ENCODE measurements at regions of chr6 and their contacts with region 1.

Region 1: GRCh38 chr6:364609-365540 is 26.7 kb upstream of the IRF4 start:
- DNase-seq: peak; percentile 79
- CTCF ChIP-seq: no peak

Region 2: DNA sequence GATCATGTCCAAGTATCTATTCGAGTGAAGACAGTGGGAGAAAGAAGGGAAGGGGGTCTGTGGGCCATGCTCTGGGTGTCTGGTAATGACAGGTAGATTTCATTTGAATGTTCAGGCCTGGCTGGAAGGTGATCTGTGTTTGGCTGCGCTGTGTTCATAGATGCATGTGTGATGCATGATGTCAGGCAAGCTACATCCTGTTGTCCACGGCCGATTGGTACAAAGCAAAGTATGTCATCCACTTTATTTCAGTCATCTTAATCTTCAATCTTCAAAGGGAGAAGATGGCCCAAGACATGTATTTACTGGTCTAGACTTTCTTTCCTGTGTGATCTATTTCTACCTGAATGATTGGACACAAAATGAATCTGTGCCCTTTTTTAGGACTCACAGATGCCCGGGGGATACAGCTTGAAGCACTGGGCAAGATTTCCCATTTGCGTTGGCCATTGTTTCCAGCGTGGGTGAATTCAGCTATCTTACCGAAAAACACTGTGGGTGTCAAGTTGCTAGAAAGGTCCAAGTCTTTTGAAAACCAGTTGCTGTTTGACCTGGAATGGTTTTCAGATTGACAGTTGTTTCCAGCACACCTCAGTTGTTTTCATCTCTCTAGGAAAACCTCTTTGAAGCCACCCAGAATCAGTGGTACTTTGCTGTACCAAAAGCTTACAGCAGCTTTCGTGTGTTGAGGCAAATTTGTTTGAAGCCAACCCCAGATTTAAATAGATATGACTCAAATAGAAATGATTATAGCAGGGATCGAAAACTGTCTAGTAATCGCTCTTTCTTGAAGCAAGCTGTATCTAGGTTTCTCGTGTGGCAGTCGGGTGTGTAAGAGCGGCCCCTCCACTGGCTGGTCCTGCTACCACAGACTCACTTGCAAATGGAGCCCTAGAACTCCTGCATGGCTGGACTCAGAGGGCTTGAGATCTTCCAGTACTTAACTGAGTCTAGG is 45.4 kb before region 1 on chr6:
- CTCF ChIA-PET with region 1: interaction called, 17 read pairs
- POLR2A ChIA-PET with region 1: no interaction called
- DNase-seq: peak; percentile 82
- CTCF ChIP-seq: no peak

Region 3: DNA sequence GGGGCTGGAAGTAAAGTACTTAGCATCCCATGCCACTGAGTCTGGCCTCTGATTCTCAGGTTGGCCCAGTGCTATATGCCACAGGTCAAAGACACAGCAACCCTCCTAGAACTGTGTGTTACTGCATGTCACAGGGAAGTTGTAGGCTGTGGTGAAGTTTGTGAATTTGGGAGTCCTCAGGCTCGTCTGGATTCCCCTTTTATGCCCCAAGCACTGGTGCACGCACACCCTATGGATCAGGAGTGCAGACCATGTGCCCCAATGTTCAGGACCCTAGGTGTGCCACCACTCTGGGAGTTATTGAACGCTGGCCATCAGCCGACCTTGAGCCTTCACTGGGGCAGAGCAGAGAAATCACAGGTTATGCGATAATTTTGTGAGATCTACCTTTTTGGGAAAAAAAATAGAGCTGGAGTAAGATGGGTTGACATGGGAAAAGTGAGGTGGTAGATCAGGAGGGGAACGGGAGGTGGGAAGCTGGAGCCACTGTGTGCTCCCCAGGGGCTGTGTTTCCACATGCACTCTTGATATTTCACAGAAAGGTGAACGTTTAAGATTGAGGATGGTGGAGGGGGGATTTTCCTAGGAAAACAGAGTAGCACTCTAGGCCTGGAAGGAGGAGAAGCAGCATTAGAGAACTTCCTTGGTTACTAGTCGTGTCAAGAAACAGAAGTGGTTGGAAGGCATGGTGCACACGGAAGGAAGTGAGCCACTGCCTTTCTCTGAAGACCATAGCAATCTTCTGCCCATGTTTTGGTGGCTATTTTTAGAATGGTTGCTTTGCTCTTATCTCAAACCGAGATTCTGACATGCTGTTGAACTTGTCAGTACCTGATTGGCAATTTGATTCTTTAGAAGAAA is 28.5 kb before region 1 on chr6:
- CTCF ChIA-PET with region 1: interaction called, 10 read pairs
- POLR2A ChIA-PET with region 1: no interaction called
- DNase-seq: peak; percentile 70
- CTCF ChIP-seq: no peak

Region 4: DNA sequence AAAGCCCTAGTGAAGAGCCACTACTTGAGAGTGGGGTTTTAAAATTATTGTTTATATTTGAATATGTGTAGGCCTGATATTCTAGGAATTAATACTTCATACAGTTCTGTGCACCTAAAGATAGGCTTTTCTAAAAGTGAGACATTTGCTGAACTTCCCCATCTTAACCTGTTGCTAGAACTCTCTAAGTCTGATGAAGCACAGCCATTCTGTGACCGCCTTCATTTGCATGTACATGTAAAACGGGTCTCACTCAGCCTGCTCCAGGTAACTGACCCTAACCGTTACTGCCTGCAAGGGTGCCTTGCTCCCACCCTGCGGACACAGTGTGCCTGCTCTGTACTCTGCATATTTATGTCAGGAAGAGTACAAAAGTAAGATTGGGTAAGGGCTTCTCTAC is 17.6 kb before region 1 on chr6:
- CTCF ChIA-PET with region 1: interaction called, 49 read pairs
- POLR2A ChIA-PET with region 1: interaction called, 5 read pairs
- DNase-seq: peak; percentile 83
- CTCF ChIP-seq: peak; percentile 7

Measured in GM10248 (cell line).